GM12878 (cell line): ENCODE measurements at regions of chr11 and their contacts with region 1.

Region 1: DNA sequence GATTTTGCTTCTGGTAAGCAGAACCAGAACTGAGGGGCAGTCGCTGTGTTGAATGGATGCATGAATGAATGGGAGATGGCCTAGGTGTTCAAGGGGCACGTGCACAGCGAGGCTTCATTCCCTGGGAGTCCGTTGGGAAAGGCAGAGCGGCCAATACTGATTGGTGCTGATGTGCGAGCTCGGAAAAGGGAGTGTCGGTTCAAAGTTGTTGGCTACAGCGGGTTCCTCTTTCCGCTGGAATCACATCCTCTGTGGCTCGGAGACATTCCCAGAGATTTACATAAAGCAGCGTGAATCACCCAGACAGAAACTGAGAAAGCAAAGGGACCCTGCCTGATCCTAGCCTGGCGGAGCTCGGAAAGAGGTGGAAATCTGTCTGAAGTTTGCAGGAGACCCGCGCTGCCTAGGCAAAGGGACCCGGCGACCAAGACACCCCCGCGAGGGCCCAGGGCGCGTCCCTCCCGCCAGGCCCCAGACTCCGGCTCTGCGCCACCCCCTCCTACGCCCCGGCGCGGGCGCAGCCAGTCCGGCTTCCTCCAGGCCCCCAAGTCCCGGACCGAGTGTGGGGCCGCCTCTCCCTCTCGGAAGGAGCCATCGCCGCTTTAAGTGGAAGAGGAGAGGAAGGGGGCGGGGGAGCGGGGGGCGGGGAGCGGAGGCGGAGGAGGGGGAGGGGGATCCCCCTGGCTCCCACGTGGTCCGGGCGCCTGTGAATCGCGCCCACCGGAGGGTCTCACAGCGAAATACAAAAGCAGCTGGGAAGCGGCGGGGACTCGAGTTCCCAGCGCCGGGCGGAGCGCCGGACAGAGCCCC is at the start of gene FJX1:
- DNase-seq: no peak
- ATAC-seq: peak; percentile 36
- H3K4me3 ChIP-seq: peak within 1 kb of the TSS; percentile 56
- H3K27ac ChIP-seq: no peak within 1 kb of the TSS; the same call in 1 of the 2 replicates
- H3K4me1 ChIP-seq: peaks cover 8% of the 10 kb centered on the region; the same call in 1 of the 2 replicates
- H3K27me3 ChIP-seq: no peaks in the 10 kb centered on the region; a peak in 2 of 4 replicates
- CTCF ChIP-seq: no peak
- EP300 ChIP-seq: no peak
- POLR2A ChIP-seq: no peak
- RAD21 ChIP-seq: no peak
- polyA plus RNA-seq, gene FJX1: 4.2 to 10.6 TPM

Region 2: DNA sequence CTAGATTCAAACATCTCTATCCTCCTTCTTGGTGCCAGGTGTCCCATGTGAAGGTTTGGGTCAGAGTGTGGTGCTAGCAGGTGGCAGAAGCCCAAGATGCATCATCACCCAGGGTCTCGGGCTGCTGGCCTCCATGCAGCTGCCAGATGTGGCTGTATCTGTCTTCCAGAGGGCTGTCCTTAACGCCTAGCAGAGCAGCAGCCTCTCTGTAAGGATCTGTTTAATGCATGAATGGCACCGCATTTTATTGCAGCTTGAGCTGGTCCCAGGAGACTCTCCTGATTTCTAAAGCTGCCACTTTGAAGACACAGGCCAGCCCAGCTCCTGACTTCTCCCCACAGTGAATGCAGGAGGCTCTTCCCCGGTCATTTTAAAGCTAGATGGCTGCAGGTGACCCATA is 224.8 kb before region 1 on chr11:
- CTCF ChIA-PET with region 1: no interaction called
- POLR2A ChIA-PET with region 1: no interaction called
- RAD21 ChIA-PET with region 1: no interaction called
- SMC1A ChIA-PET with region 1: no interaction called
- in situ Hi-C with region 1: no loop called
- intact Hi-C with region 1: no loop called
- DNase-seq: no peak
- ATAC-seq: no peak
- H3K4me3 ChIP-seq: no peak overlapping the region
- H3K27ac ChIP-seq: no peak overlapping the region
- H3K4me1 ChIP-seq: peaks cover 25% of the 10 kb centered on the region
- H3K27me3 ChIP-seq: no peaks in the 10 kb centered on the region; a peak in 1 of 4 replicates
- CTCF ChIP-seq: no peak
- EP300 ChIP-seq: no peak
- POLR2A ChIP-seq: no peak
- RAD21 ChIP-seq: no peak

Region 3: GRCh38 chr11:35662649-35663407 is 44.9 kb after region 1 on chr11 and contains the start of gene TRIM44:
- CTCF ChIA-PET with region 1: no interaction called
- POLR2A ChIA-PET with region 1: no interaction called
- RAD21 ChIA-PET with region 1: no interaction called
- SMC1A ChIA-PET with region 1: no interaction called
- in situ Hi-C with region 1: no loop called
- intact Hi-C with region 1: loop called (anchors 1 kb)
- DNase-seq: peak; percentile 37
- ATAC-seq: peak; percentile 93
- H3K4me3 ChIP-seq: peak within 1 kb of the TSS; percentile 73
- H3K27ac ChIP-seq: peak within 1 kb of the TSS; percentile 70
- H3K4me1 ChIP-seq: peaks cover 7% of the 10 kb centered on the region
- H3K27me3 ChIP-seq: no peaks in the 10 kb centered on the region
- CTCF ChIP-seq: no peak
- EP300 ChIP-seq: 0 out of 4 replicates have a peak, but pooled peaks of 1 of the 2 experiments have one; percentile 19
- POLR2A ChIP-seq: peak; percentile 89
- RAD21 ChIP-seq: no peak
- polyA plus RNA-seq, gene TRIM44: 6.7 to 8.9 TPM

Region 4: GRCh38 chr11:35919244-35919643 is 301.4 kb after region 1 on chr11:
- CTCF ChIA-PET with region 1: no interaction called
- POLR2A ChIA-PET with region 1: no interaction called
- RAD21 ChIA-PET with region 1: no interaction called
- SMC1A ChIA-PET with region 1: no interaction called
- in situ Hi-C with region 1: no loop called
- intact Hi-C with region 1: loop called (anchors 10 kb)
- DNase-seq: no peak
- ATAC-seq: no peak
- H3K4me3 ChIP-seq: no peak overlapping the region
- H3K27ac ChIP-seq: no peak overlapping the region
- H3K4me1 ChIP-seq: peaks cover 39% of the 10 kb centered on the region
- H3K27me3 ChIP-seq: no peaks in the 10 kb centered on the region
- CTCF ChIP-seq: no peak
- EP300 ChIP-seq: no peak
- POLR2A ChIP-seq: no peak
- RAD21 ChIP-seq: no peak

Region 5: DNA sequence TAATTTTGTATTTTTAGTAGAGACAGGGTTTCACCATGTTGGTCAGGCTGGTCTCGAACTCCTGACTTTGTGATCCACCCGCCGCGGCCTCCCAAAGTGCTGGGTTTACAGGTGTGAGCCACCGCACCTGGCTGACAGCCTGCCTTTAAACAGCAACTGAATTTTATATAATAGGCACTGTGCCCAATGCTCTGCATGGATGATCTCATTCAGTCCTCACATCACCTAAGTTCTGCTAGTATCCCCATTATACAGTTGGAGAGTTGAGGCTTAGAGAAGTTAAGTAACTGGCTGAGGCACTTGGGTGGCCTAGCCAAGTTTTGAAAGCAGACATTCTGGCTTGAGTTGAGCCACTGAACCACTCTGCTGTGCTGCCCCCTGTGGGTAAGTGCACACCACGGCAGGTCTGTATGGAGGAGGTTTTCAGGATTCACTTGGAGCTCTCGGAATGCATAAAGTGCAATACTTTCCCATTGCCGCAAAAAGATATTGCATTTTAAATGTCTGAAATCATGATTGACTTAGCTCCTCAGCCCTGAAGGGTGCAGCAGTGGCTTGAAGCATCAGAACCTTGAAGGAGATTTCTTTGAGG is 438.4 kb after region 1 on chr11:
- CTCF ChIA-PET with region 1: interaction called, 3 read pairs
- POLR2A ChIA-PET with region 1: no interaction called
- RAD21 ChIA-PET with region 1: no interaction called
- SMC1A ChIA-PET with region 1: no interaction called
- in situ Hi-C with region 1: no loop called
- intact Hi-C with region 1: loop called (anchors 5 kb)
- DNase-seq: no peak
- ATAC-seq: peak; percentile 60
- H3K4me3 ChIP-seq: no peak overlapping the region
- H3K27ac ChIP-seq: no peak overlapping the region
- H3K4me1 ChIP-seq: no peaks in the 10 kb centered on the region; the same call in 1 of the 2 replicates
- H3K27me3 ChIP-seq: no peaks in the 10 kb centered on the region; a peak in 1 of 4 replicates
- CTCF ChIP-seq: peak; percentile 41 to 62 (median 53); a peak in 5 of 6 replicates
- EP300 ChIP-seq: no peak
- POLR2A ChIP-seq: no peak
- RAD21 ChIP-seq: peak; percentile 65

Region 6: GRCh38 chr11:36131721-36132397 is 514.0 kb after region 1 on chr11:
- CTCF ChIA-PET with region 1: interaction called, 17 read pairs
- POLR2A ChIA-PET with region 1: no interaction called
- RAD21 ChIA-PET with region 1: interaction called, 6 read pairs
- SMC1A ChIA-PET with region 1: interaction called, 4 read pairs
- in situ Hi-C with region 1: loop called (anchors 5 kb)
- intact Hi-C with region 1: loop called (anchors 1 kb)
- DNase-seq: no peak
- ATAC-seq: peak; percentile 95
- H3K4me3 ChIP-seq: no peak overlapping the region
- H3K27ac ChIP-seq: no peak overlapping the region
- H3K4me1 ChIP-seq: no peaks in the 10 kb centered on the region
- H3K27me3 ChIP-seq: peaks cover 0 to 2% of the 10 kb centered on the region in 2 experiments; a peak in 2 of 4 replicates
- CTCF ChIP-seq: peak; percentile 63 to 77 (median 74)
- EP300 ChIP-seq: no peak
- POLR2A ChIP-seq: no peak
- RAD21 ChIP-seq: peak; percentile 78

Region 7: GRCh38 chr11:36258730-36259360 is 641.0 kb after region 1 on chr11:
- CTCF ChIA-PET with region 1: interaction called, 7 read pairs
- POLR2A ChIA-PET with region 1: no interaction called
- RAD21 ChIA-PET with region 1: interaction called, 3 read pairs
- SMC1A ChIA-PET with region 1: interaction called, 4 read pairs
- in situ Hi-C with region 1: no loop called
- intact Hi-C with region 1: loop called (anchors 2 kb)
- DNase-seq: no peak
- ATAC-seq: peak; percentile 87
- H3K4me3 ChIP-seq: no peak overlapping the region
- H3K27ac ChIP-seq: no peak overlapping the region
- H3K4me1 ChIP-seq: no peaks in the 10 kb centered on the region
- H3K27me3 ChIP-seq: no peaks in the 10 kb centered on the region; a peak in 1 of 4 replicates
- CTCF ChIP-seq: peak; percentile 42 to 45 (median 43); a peak in 5 of 6 replicates
- EP300 ChIP-seq: no peak
- POLR2A ChIP-seq: no peak
- RAD21 ChIP-seq: peak; percentile 62